ENCODE measurements at regions of chr17 and their contacts with region 1.

Region 1: DNA sequence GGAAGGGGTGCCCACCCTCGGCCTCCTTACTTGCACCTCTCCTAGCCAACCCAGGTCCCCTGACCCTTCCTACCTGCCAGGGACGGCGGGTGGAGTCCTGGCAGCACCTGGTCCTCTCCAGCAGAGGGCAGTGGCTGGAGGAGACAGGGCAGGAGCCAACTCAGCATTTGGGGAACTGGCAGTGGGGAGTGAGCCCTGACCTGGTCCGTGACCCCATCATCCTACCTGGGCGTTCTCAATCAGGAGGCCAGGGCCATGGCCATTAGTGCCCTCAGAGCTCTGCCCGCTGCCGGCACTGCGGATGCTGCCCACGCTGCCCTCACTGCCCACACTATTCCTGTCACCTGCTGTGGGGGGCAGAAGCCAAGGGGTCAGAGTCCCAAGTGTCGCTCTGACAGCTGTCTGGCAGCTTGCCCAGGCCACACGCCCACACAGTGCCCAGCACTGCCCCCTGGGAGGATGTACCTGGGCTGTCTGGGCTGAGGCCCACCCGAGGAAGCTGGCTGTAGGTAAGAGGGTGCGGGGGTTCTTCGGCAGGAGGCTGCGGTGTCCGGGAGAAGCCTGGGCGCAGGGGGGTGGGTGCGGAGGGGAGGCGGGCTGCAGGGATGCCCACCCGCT is 10.9 kb downstream of the CASKIN2 start:
- DNase-seq: peak; percentile 61 to 89
- ATAC-seq: peak; percentile 70 to 81
- H3K4me3 ChIP-seq: no peak overlapping the region
- H3K27ac ChIP-seq: no peak overlapping the region
- H3K4me1 ChIP-seq: peaks cover 14% of the 10 kb centered on the region
- CTCF ChIP-seq: peak; percentile 67
- EP300 ChIP-seq: no peak
- POLR2A ChIP-seq: no peak
- RAD21 ChIP-seq: peak; percentile 61 to 66

Region 2: GRCh38 chr17:75430159-75430974 is 74.1 kb before region 1 on chr17:
- CTCF ChIA-PET with region 1: interaction called, 41 read pairs
- POLR2A ChIA-PET with region 1: no interaction called
- DNase-seq: peak; percentile 90 to 91
- ATAC-seq: peak; percentile 66 to 84; a peak in 5 of 6 replicates
- H3K4me3 ChIP-seq: peak overlapping the region; percentile 17; the same call in 2 of the 3 replicates
- H3K27ac ChIP-seq: peak overlapping the region; percentile 80 to 89
- H3K4me1 ChIP-seq: peaks cover 35% of the 10 kb centered on the region
- CTCF ChIP-seq: no peak
- EP300 ChIP-seq: no peak
- POLR2A ChIP-seq: 0 out of 2 replicates have a peak, but pooled peaks have one; percentile 15
- RAD21 ChIP-seq: no peak

Region 3: DNA sequence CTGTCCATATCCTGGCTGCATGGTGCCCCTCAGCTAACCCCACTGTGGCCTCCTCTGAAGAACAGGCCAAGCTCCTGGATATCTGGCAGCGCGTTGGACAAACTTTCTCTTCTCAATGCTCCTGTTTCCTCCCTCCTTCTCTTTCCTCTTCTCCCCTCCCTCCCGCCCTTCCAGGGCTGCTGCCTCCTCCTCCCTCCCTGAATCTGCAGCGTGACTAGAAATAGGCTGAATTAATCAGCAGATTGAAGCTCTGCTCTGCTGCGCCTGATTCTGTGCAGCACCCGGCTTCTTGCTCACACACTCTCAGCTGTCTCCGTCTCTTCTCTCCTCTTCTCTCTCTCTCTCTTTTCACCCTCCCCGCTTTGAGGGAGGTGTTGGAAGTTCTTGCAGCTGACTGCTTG is 28.2 kb before region 1 on chr17:
- CTCF ChIA-PET with region 1: interaction called, 26 read pairs
- POLR2A ChIA-PET with region 1: no interaction called
- DNase-seq: no peak
- ATAC-seq: no peak
- H3K4me3 ChIP-seq: no peak overlapping the region
- H3K27ac ChIP-seq: no peak overlapping the region
- H3K4me1 ChIP-seq: no peaks in the 10 kb centered on the region
- CTCF ChIP-seq: no peak
- EP300 ChIP-seq: no peak
- POLR2A ChIP-seq: no peak
- RAD21 ChIP-seq: no peak

Region 4: GRCh38 chr17:75481194-75482068 is 23.0 kb before region 1 on chr17:
- CTCF ChIA-PET with region 1: interaction called, 26 read pairs
- POLR2A ChIA-PET with region 1: no interaction called
- DNase-seq: no peak
- ATAC-seq: peak in 1 of 2 experiments; percentile 24; a peak in 3 of 6 replicates
- H3K4me3 ChIP-seq: no peak overlapping the region
- H3K27ac ChIP-seq: peak overlapping the region in 1 of 2 experiments; percentile 9; a peak in 1 of 6 replicates
- H3K4me1 ChIP-seq: no peaks in the 10 kb centered on the region
- CTCF ChIP-seq: no peak
- EP300 ChIP-seq: no peak
- POLR2A ChIP-seq: no peak
- RAD21 ChIP-seq: no peak

Region 5: GRCh38 chr17:75490173-75490743 is 14.2 kb before region 1 on chr17:
- CTCF ChIA-PET with region 1: interaction called, 40 read pairs
- POLR2A ChIA-PET with region 1: interaction called, 3 read pairs
- DNase-seq: no peak
- ATAC-seq: no peak; a peak in 1 of 6 replicates
- H3K4me3 ChIP-seq: no peak overlapping the region
- H3K27ac ChIP-seq: no peak overlapping the region; a peak in 1 of 6 replicates
- H3K4me1 ChIP-seq: no peaks in the 10 kb centered on the region
- CTCF ChIP-seq: no peak
- EP300 ChIP-seq: no peak
- POLR2A ChIP-seq: no peak
- RAD21 ChIP-seq: no peak

Region 6: DNA sequence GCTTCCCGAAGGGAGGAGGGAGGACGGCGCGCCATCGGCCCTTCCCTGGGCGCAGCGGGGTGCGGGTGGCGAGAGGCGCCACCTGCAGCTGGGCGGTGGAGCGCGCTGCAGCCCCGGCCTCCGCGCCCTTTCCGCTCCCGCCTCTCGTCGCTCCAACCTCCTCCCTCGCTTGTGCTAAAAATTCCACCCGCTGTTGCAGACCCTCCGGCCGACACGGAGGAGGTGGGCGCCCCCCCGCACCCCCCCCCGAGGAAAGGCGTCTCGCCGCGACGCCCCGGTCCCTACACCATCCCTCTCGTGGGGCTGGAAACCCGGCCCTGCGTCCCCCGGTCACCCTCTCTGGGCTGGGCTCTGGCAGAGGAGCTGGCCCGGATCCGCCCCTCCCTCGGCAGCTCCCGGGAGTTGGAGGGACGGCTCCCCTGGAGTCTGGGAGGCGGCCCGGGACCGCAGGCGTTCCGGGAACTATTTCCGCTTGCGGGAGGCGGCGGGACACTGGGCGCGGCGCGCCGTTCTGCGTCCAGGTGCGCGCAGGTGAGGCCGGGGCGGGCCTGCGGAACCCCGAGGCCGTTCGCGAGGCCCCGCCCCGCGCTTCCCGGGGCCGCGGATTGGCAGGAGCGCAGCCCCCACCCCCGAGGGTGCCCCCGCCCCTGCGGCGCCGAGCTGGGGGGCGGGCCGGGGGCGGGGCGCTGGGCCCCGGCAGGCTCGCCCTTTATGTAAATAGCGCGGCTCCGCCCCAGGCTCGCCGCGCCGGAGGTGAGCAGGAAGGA is 20.7 kb after region 1 on chr17 and contains the start of gene LLGL2:
- CTCF ChIA-PET with region 1: interaction called, 19 read pairs
- POLR2A ChIA-PET with region 1: no interaction called
- DNase-seq: peak; percentile 83 to 93
- ATAC-seq: peak; percentile 85 to 90
- H3K4me3 ChIP-seq: peak within 1 kb of the TSS; percentile 67
- H3K27ac ChIP-seq: peak within 1 kb of the TSS; percentile 83 to 88
- H3K4me1 ChIP-seq: peaks cover 21% of the 10 kb centered on the region
- CTCF ChIP-seq: peak; percentile 69
- EP300 ChIP-seq: no peak
- POLR2A ChIP-seq: no peak
- RAD21 ChIP-seq: peak; percentile 18 to 59; a peak in 4 of 5 replicates
- polyA plus RNA-seq, gene LLGL2: 18.9 and 20.7 TPM in 2 replicates

Region 7: GRCh38 chr17:75547091-75547490 is 42.6 kb after region 1 on chr17:
- CTCF ChIA-PET with region 1: no interaction called
- POLR2A ChIA-PET with region 1: no interaction called
- DNase-seq: no peak
- ATAC-seq: no peak
- H3K4me3 ChIP-seq: no peak overlapping the region
- H3K27ac ChIP-seq: no peak overlapping the region
- H3K4me1 ChIP-seq: peaks cover 26% of the 10 kb centered on the region
- CTCF ChIP-seq: no peak
- EP300 ChIP-seq: no peak
- POLR2A ChIP-seq: no peak
- RAD21 ChIP-seq: no peak

Region 8: DNA sequence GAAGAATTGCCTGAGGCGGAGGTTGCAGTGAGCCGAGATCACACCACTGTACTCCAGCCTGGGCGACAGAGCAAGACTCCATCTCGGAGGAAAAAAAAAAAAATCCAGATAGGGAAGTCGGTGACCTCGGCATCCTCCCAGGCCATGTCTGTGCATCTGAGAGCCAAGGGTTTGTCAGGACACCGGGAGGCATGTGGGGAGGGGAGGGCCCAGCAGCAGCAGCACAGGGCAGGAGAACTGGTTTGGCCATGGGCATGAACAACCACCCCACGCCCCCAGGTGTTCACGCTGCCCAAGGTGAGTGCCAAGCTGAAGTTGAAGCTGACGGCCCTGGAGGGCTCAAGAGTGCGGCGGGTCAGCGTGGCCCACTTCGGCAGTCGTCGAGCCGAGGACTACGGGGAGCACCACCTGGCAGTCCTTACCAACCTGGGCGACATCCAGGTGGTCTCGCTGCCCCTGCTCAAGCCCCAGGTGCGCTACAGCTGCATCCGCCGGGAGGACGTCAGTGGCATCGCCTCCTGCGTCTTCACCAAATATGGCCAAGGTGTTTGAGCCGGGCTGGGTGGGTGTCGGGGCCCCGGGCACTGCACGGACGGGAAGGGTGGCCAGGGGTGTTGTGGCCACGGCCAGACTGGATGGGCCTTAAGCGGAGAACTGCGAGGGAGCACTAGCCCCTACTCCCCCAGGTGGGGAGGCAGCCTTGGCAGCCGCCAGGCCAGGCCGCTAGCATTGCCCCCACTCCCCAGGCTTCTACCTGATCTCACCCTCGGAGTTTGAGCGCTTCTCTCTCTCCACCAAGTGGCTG is 68.5 kb after region 1 on chr17:
- CTCF ChIA-PET with region 1: no interaction called
- POLR2A ChIA-PET with region 1: no interaction called
- DNase-seq: no peak
- ATAC-seq: no peak
- H3K4me3 ChIP-seq: no peak overlapping the region
- H3K27ac ChIP-seq: no peak overlapping the region
- H3K4me1 ChIP-seq: no peaks in the 10 kb centered on the region
- CTCF ChIP-seq: no peak
- EP300 ChIP-seq: no peak
- POLR2A ChIP-seq: no peak
- RAD21 ChIP-seq: no peak

Measured in A549 (cell line).